Posterior vena cava (tissue), 2 donors: ENCODE measurements at regions of chr10 and their contacts with region 1.

Region 1: GRCh38 chr10:19412531-19412930 is 363.9 kb downstream of the MALRD1 start:
- DNase-seq: no peak

Region 2: DNA sequence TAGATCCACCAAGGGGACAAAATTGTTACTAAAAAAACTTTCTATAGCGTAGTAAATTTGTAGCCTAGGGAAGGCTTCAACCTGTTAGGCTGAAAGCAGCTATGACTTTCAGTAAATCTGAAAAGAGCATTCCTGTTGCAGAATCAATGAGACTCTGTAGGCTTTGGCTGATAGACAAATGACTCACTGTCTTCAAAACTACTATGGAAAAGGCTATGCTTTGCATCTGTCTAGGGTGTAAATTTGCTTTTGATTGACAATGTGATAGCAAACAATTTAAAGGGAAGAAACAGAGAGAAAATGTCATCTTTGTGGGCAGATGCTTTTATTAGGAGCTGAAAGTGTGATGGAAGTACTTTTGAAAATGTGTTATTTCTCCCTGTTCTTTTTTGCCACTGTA is 692.7 kb before region 1 on chr10:
- intact Hi-C with region 1: loop called in 1 of 2 experiments (anchors 5 kb)
- DNase-seq: no peak

Region 3: DNA sequence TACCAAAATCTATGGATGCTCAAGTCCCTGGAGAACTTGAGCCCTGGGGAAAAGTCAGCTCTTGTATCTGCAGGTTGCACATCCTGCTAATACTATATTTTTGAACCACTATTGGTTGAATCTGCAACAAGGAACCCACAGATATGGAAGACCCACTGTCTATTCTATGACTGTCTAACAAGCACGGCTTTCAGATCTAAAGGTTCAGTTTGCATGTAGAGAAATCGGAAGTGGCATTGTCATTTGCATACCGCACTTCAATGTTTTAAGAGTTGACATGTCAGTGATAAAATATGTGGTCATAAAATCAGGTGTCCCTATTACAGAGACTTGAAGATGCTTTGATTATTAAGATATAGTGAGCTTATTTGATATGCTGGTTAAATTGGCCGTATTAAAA is 268.3 kb before region 1 on chr10:
- intact Hi-C with region 1: no loop called
- DNase-seq: no peak

Region 4: DNA sequence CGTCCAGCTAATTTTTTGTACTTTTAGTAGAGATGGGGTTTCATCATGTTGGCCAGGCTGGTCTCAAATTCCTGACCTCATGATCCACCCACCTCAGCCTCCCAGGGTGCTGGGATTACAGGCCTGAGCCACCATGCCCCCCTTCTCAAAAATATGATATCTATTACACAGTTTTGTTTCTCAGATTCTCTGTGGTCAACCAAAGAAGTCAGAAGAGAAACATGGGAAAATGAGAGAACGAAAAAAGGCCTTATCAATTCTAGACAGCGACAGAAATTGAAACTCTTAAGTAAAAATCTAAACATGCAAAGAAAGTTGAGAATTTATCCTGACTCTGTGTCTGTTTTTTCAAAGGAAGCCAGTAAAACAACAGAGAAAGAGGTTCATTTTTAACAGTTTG is 119.9 kb after region 1 on chr10:
- intact Hi-C with region 1: no loop called
- DNase-seq: no peak

Region 5: GRCh38 chr10:19556666-19557065 is 144.1 kb after region 1 on chr10:
- intact Hi-C with region 1: no loop called
- DNase-seq: no peak

Region 6: DNA sequence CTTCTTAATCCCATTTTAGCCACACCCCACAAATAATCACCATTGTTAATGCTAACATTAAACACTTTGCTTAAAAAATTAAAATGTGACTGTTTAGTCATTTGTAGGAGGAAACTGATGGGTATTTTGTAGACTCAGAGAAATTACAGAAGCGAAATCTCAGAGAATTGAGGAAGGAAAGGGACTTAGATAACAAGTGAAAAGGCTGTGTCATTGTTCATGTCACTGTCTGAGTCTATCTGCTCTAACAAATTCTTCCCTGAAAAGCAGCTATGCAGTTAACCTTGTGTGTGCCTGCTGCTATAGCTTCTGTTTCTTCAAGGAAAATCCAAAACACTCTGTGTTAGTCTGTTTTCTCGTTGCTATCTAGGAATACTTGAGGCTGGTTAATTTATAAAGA is 362.8 kb after region 1 on chr10:
- intact Hi-C with region 1: loop called in 1 of 2 experiments (anchors 10 kb)
- DNase-seq: no peak